MCF 10A (cell line): ENCODE measurements at regions of chr3 and their contacts with region 1.

Region 1: DNA sequence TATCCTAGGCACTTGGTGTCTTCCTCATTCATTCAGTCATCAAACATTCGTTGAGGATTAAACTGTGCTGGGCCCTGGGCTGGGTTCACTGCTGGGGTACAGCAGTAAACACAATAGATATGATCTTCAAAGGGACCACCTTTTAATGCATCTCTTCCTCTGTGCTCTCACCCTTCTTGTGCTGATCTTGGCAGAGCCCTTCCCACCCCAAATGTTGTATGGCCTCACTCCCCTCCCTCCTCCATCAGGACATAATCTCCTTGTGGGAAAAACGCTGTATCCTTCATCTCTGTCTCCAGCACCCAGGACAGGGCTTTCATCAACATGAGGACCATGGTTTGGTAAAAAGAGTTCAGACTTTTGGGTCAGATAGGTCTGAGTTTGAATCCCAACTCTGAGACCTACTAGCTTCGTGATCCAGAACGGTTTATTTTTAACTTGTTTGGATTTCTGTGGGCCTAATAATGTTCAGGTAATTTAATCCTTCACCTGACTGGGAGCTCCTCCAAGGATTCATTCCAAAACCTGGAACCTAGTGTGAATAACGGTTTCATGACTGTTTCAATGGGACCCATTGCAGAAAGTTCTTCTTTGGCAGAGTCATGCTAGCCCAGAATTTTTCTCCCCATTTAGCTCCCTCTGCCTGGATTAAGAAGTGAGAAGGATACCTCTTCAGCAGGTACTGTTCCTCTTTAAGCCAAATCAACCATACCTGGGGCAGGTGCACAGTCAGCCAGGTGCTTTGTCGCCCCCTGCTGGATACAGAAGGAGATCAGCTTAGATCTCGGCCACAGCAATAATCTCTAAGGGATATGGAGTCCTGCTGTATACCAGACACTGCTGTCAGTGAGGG is 5.2 kb upstream of the WNT7A start:
- DNase-seq: peak; percentile 75
- H3K4me3 Mint-ChIP-seq: no peak overlapping the region
- H3K27ac Mint-ChIP-seq: no peak overlapping the region
- H3K4me1 Mint-ChIP-seq: peaks cover 1% of the 10 kb centered on the region
- H3K27me3 Mint-ChIP-seq: peaks cover 34% of the 10 kb centered on the region
- CTCF ChIP-seq: peak; percentile 82

Region 2: DNA sequence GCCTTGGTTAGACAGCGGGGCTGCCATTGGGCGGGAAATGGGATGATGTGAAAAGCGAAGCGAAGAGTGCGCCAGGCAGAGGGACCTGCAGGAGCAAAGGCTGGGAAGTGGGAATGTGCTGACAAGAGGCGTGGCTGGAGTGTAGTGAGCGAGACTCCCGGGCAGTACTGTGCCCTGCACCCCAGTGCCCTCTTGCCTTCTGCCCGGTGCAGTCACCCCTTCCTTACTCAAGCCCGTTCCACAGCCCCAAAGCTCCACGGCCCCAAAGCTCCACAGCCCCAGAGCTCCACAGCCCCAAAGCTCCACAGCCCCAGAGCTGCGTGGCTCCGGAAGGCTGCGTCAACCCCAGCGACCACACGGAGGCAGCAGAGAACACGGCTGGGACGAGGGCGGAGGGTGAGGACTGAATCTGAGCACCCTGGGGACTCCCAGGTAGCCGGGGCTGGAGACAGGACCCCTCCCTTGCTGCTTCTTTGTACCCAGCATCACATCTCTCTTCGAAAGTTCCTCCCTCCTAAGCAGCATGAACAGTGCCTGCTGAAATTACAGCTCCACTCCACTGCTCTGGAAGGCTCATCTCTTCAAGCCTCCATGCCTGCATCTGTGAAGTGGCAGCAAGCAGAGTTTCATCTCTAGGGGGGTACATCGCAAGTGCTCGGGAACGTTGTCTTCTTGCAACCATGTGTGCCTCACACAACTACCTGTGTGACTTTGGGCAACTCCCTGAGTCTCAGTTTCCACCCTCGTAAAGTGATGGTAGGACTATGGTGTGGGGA is 227.2 kb before region 1 on chr3:
- CTCF ChIA-PET with region 1: interaction called, 597 read pairs
- POLR2A ChIA-PET with region 1: interaction called, 13 read pairs
- intact Hi-C with region 1: loop called (anchors 1 kb)
- DNase-seq: peak; percentile 66
- H3K4me3 Mint-ChIP-seq: no peak overlapping the region
- H3K27ac Mint-ChIP-seq: no peak overlapping the region
- H3K4me1 Mint-ChIP-seq: peaks cover 12% of the 10 kb centered on the region
- H3K27me3 Mint-ChIP-seq: no peaks in the 10 kb centered on the region
- CTCF ChIP-seq: peak; percentile 95

Region 3: GRCh38 chr3:13740795-13741194 is 144.3 kb before region 1 on chr3:
- CTCF ChIA-PET with region 1: interaction called, 11 read pairs
- POLR2A ChIA-PET with region 1: no interaction called
- intact Hi-C with region 1: no loop called
- DNase-seq: no peak
- H3K4me3 Mint-ChIP-seq: no peak overlapping the region
- H3K27ac Mint-ChIP-seq: no peak overlapping the region
- H3K4me1 Mint-ChIP-seq: no peaks in the 10 kb centered on the region
- H3K27me3 Mint-ChIP-seq: peaks cover 62% of the 10 kb centered on the region
- CTCF ChIP-seq: no peak

Region 4: GRCh38 chr3:13861039-13861438 is 24.0 kb before region 1 on chr3:
- CTCF ChIA-PET with region 1: interaction called, 12 read pairs
- POLR2A ChIA-PET with region 1: no interaction called
- intact Hi-C with region 1: no loop called
- DNase-seq: no peak
- H3K4me3 Mint-ChIP-seq: no peak overlapping the region
- H3K27ac Mint-ChIP-seq: no peak overlapping the region
- H3K4me1 Mint-ChIP-seq: no peaks in the 10 kb centered on the region
- H3K27me3 Mint-ChIP-seq: no peaks in the 10 kb centered on the region
- CTCF ChIP-seq: no peak